ENCODE measurements at regions of chr9 and their contacts with region 1.

Region 1: DNA sequence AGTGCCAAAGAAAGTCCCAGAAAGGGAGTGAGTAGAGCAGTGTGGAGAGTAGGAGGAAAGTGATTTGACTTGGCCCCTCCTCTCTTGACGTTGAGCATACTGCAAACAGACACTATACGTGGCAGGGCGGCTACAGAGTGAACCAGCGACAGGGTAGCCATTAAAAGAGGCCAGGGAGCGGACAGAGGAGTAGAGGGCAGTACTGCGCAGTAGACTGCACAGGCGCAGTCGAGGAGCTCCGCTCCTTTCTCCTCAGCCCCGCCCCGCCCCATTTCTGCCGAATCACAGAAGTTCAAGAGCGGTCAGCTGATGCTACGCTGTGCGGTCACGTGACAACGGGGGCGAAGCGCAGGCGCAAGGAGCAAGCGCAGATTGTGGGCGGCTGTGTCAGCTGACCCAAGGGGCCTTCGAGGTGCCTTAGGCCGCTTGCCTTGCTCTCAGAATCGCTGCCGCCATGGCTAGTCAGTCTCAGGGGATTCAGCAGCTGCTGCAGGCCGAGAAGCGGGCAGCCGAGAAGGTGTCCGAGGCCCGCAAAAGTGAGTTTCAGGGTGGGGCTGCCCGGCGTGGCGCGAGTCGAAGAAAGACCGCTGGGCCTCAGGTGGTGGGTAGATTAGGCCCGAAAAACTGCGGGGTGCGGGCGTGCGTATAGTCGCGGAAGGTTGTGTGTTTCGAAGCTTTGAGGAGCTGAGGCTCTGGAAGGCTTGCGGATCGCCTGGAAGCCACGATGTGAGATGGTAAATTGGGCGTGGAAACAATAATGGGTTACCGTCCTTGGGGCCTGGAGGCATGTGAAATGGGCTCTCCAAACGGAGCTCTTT is at the start of gene ATP6V1G1:
- DNase-seq: peak; percentile 96
- ATAC-seq: peak; percentile 95
- H3K4me3 ChIP-seq: peak within 1 kb of the TSS; percentile 98
- H3K27ac ChIP-seq: peak within 1 kb of the TSS; percentile 78
- H3K4me1 ChIP-seq: no peaks in the 10 kb centered on the region; the same call in 1 of the 2 replicates
- H3K27me3 ChIP-seq: no peaks in the 10 kb centered on the region
- CTCF ChIP-seq: peak in 1 of 3 experiments; percentile 17; a peak in 1 of 6 replicates
- EP300 ChIP-seq: peak; percentile 9 to 49; a peak in 1 of 4 replicates
- POLR2A ChIP-seq: peak; percentile 98
- RAD21 ChIP-seq: no peak
- polyA plus RNA-seq, gene ATP6V1G1: 162 to 204 TPM

Region 2: GRCh38 chr9:114434878-114435311 is 152.7 kb before region 1 on chr9:
- CTCF ChIA-PET with region 1: interaction called, 12 read pairs
- POLR2A ChIA-PET with region 1: no interaction called
- RAD21 ChIA-PET with region 1: interaction called, 3 read pairs
- SMC1A ChIA-PET with region 1: interaction called, 16 read pairs
- in situ Hi-C with region 1: no loop called
- intact Hi-C with region 1: no loop called
- DNase-seq: no peak
- ATAC-seq: peak; percentile 77
- H3K4me3 ChIP-seq: no peak overlapping the region
- H3K27ac ChIP-seq: no peak overlapping the region
- H3K4me1 ChIP-seq: no peaks in the 10 kb centered on the region
- H3K27me3 ChIP-seq: peaks cover 0 to 4% of the 10 kb centered on the region in 2 experiments; a peak in 1 of 4 replicates
- CTCF ChIP-seq: peak; percentile 58 to 75 (median 71)
- EP300 ChIP-seq: no peak
- POLR2A ChIP-seq: no peak
- RAD21 ChIP-seq: peak; percentile 91

Region 3: DNA sequence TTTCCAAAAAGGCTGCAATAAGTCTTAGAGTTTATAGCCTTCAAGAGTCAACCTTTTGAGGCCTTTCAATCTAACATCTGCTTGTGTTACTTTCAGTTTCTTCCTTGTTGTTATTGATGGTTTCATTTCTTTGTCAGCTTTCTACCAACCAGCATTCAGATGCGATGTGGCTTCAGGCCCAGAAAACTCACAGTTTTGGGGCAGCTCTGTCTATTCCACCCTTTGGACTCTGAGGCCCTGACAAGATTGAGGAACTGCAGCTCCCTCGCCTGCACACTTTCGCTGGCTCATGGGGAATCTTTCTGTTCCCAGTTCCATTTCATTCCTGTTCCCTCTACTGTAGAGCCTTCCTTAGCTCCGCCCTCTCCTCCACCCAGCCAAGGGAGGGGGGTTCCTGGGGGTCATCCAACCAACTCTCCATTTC is 69.0 kb before region 1 on chr9:
- CTCF ChIA-PET with region 1: interaction called, 3 read pairs
- POLR2A ChIA-PET with region 1: interaction called, 3 read pairs
- RAD21 ChIA-PET with region 1: interaction called, 12 read pairs
- SMC1A ChIA-PET with region 1: interaction called, 4 read pairs
- in situ Hi-C with region 1: no loop called
- intact Hi-C with region 1: no loop called
- DNase-seq: peak; percentile 7
- ATAC-seq: peak; percentile 83
- H3K4me3 ChIP-seq: no peak overlapping the region
- H3K27ac ChIP-seq: peak overlapping the region; percentile 19; the same call in 1 of the 2 replicates
- H3K4me1 ChIP-seq: peaks cover 7% of the 10 kb centered on the region
- H3K27me3 ChIP-seq: peaks cover 0 to 3% of the 10 kb centered on the region in 2 experiments; a peak in 2 of 4 replicates
- CTCF ChIP-seq: no peak
- EP300 ChIP-seq: no peak
- POLR2A ChIP-seq: no peak
- RAD21 ChIP-seq: no peak

Region 4: GRCh38 chr9:114616653-114617520 is 29.3 kb after region 1 on chr9:
- CTCF ChIA-PET with region 1: interaction called, 26 read pairs
- POLR2A ChIA-PET with region 1: interaction called, 30 read pairs
- RAD21 ChIA-PET with region 1: interaction called, 44 read pairs
- SMC1A ChIA-PET with region 1: interaction called, 62 read pairs
- in situ Hi-C with region 1: no loop called
- intact Hi-C with region 1: no loop called
- DNase-seq: peak; percentile 72
- ATAC-seq: peak; percentile 65
- H3K4me3 ChIP-seq: peak overlapping the region; percentile 62
- H3K27ac ChIP-seq: peak overlapping the region; percentile 96
- H3K4me1 ChIP-seq: peaks cover 66% of the 10 kb centered on the region
- H3K27me3 ChIP-seq: no peaks in the 10 kb centered on the region
- CTCF ChIP-seq: no peak
- EP300 ChIP-seq: 0 out of 4 replicates have a peak, but pooled peaks of 1 of the 2 experiments have one; percentile 44
- POLR2A ChIP-seq: no peak
- RAD21 ChIP-seq: no peak

Region 5: DNA sequence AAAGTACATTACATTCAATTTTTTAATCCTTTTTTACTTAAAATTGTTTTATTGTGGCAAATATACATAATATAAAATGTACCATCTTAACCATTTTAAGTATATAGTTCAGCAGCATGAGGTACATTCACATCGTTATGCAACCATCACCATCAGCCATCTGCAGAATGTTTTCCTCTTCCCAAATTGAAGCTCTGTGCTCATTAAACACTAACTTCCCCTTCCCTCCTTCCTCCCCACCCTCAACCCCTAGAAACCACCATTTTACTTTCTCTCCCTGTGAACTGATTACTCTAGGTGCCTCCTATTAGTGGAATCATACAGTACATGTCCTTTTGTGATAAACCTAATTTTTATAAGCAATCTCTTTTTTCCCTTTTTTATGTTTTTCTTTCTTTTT is 54.4 kb after region 1 on chr9:
- CTCF ChIA-PET with region 1: interaction called, 13 read pairs
- POLR2A ChIA-PET with region 1: interaction called, 4 read pairs
- RAD21 ChIA-PET with region 1: interaction called, 3 read pairs
- SMC1A ChIA-PET with region 1: interaction called, 8 read pairs
- in situ Hi-C with region 1: no loop called
- intact Hi-C with region 1: no loop called
- DNase-seq: no peak
- ATAC-seq: no peak
- H3K4me3 ChIP-seq: no peak overlapping the region
- H3K27ac ChIP-seq: no peak overlapping the region
- H3K4me1 ChIP-seq: no peaks in the 10 kb centered on the region
- H3K27me3 ChIP-seq: no peaks in the 10 kb centered on the region
- CTCF ChIP-seq: no peak
- EP300 ChIP-seq: no peak
- POLR2A ChIP-seq: no peak
- RAD21 ChIP-seq: no peak

Region 6: DNA sequence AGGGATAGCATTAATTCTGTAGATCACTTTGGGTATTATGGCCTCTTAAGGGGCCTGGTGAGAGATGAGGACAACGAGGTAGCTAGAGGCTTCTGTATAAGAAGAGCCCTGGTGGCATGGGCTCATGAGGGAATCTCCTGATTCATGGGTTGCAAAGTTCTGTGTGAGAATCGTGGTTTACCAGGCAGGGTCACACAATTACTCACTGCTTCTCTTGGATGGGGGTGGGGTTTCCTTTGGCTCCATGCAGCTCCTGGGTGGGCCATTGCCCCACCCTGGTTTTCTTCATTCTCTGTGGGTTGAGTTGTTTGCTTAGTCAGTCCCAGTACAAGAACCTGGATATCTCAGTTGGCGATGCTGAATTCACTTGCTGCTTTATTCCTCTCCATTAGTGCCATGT is 249.2 kb after region 1 on chr9:
- CTCF ChIA-PET with region 1: no interaction called
- POLR2A ChIA-PET with region 1: no interaction called
- RAD21 ChIA-PET with region 1: no interaction called
- SMC1A ChIA-PET with region 1: no interaction called
- in situ Hi-C with region 1: no loop called
- intact Hi-C with region 1: no loop called
- DNase-seq: no peak
- ATAC-seq: no peak
- H3K4me3 ChIP-seq: no peak overlapping the region
- H3K27ac ChIP-seq: no peak overlapping the region
- H3K4me1 ChIP-seq: no peaks in the 10 kb centered on the region
- H3K27me3 ChIP-seq: no peaks in the 10 kb centered on the region; a peak in 2 of 4 replicates
- CTCF ChIP-seq: no peak
- EP300 ChIP-seq: no peak
- POLR2A ChIP-seq: no peak
- RAD21 ChIP-seq: no peak

Measured in GM12878 (cell line).